IMR-90 (cell line): ENCODE measurements at regions of chr4 and their contacts with region 1.

Region 1: GRCh38 chr4:180688480-180688879 is 1554.7 kb upstream of the TENM3 start:
- DNase-seq: no peak
- ATAC-seq: no peak
- H3K4me3 ChIP-seq: no peak overlapping the region
- H3K27ac ChIP-seq: no peak overlapping the region
- H3K4me1 ChIP-seq: no peaks in the 10 kb centered on the region
- H3K27me3 ChIP-seq: no peaks in the 10 kb centered on the region
- CTCF ChIP-seq: no peak
- POLR2A ChIP-seq: no peak
- RAD21 ChIP-seq: no peak

Region 2: DNA sequence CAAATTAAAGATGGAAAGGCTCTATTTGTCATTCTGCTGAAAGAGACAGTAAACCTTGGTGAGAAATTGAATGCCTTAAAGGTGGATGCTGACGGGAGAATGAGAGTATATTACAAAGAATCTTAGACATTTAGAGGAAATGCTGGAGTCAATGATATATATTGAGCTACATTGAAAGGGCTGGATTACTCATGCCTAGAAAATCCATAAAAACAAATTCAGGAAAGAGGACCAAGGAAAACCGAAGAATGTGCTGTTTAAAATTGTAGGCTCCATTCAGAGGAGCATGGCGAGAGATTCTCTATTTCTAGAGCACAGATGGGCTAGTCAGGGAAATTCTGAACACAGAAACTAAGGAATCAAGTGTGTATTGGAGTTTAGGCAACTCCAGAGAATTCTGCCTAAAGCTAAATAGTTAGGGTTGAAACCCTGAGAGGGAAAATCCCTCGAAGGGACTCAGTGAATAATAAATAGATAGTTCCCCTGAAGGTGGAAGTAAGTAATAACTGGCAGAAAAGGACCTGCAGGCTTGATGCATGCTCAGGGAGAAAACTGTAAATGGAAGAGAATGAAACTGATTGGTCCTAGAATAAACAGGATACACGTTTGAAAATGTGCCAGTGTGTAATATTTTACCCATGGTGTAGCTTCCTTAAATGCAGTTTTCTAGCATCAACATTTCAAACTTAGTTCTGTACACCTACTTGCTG is 22.3 kb after region 1 on chr4:
- CTCF ChIA-PET with region 1: no interaction called
- POLR2A ChIA-PET with region 1: no interaction called
- dilution Hi-C with region 1: no loop called
- in situ Hi-C with region 1: no loop called
- intact Hi-C with region 1: no loop called
- DNase-seq: peak; percentile 52
- ATAC-seq: peak; percentile 95
- H3K4me3 ChIP-seq: no peak overlapping the region
- H3K27ac ChIP-seq: peak overlapping the region; percentile 51
- H3K4me1 ChIP-seq: no peaks in the 10 kb centered on the region
- H3K27me3 ChIP-seq: no peaks in the 10 kb centered on the region
- CTCF ChIP-seq: no peak
- POLR2A ChIP-seq: no peak
- RAD21 ChIP-seq: no peak

Region 3: GRCh38 chr4:180937083-180937482 is 248.6 kb after region 1 on chr4:
- CTCF ChIA-PET with region 1: no interaction called
- POLR2A ChIA-PET with region 1: no interaction called
- dilution Hi-C with region 1: no loop called
- in situ Hi-C with region 1: no loop called
- intact Hi-C with region 1: loop called (anchors 5 kb)
- DNase-seq: peak; percentile 19
- ATAC-seq: no peak
- H3K4me3 ChIP-seq: no peak overlapping the region
- H3K27ac ChIP-seq: no peak overlapping the region
- H3K4me1 ChIP-seq: no peaks in the 10 kb centered on the region
- H3K27me3 ChIP-seq: no peaks in the 10 kb centered on the region
- CTCF ChIP-seq: no peak
- POLR2A ChIP-seq: no peak
- RAD21 ChIP-seq: no peak